Activated CD4-positive, alpha-beta T cell treated with anti-CD3 and anti-CD28 coated beads for 36 hours (primary cell): ENCODE measurements at regions of chr17 and their contacts with region 1.

Region 1: GRCh38 chr17:15914400-15915170 is 30.3 kb upstream of the ADORA2B start:
- DNase-seq: peak; percentile 19
- ATAC-seq: peak; percentile 57
- H3K4me3 Mint-ChIP-seq: no peak overlapping the region
- H3K27ac Mint-ChIP-seq: no peak overlapping the region
- H3K4me1 Mint-ChIP-seq: no peaks in the 10 kb centered on the region
- H3K27me3 Mint-ChIP-seq: peaks cover 7% of the 10 kb centered on the region

Region 2: DNA sequence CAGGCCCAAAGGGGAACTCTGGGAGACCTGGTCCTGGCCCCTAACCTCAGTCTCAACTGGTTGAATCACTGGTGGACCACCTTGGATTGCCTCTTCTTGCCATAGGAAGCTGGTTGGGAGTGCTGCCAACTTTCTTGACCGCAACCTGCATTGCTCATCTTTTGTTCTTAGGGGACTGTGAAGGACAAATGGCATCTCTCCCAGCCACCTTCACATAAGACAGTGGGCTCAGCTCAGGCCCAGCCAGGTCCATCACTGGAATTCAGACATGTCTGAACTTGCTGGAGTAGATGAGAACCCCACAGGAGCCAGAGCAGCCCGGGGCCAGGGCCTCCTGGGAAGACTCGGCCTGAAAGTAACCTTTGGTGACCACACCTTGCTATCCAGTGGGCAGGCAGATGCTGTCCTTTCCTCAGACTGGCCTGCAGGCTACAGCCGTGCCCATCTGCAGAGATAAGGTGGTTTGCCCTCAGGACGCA is 49.1 kb after region 1 on chr17:
- CTCF ChIA-PET with region 1: no interaction called
- POLR2A ChIA-PET with region 1: no interaction called
- intact Hi-C with region 1: loop called in 1 of 2 experiments (anchors 5 kb)
- DNase-seq: no peak
- ATAC-seq: no peak
- H3K4me3 Mint-ChIP-seq: no peak overlapping the region
- H3K27ac Mint-ChIP-seq: no peak overlapping the region
- H3K4me1 Mint-ChIP-seq: peaks cover 24% of the 10 kb centered on the region
- H3K27me3 Mint-ChIP-seq: peaks cover 18% of the 10 kb centered on the region